ENCODE measurements at regions of chr17 and their contacts with region 1.

Region 1: DNA sequence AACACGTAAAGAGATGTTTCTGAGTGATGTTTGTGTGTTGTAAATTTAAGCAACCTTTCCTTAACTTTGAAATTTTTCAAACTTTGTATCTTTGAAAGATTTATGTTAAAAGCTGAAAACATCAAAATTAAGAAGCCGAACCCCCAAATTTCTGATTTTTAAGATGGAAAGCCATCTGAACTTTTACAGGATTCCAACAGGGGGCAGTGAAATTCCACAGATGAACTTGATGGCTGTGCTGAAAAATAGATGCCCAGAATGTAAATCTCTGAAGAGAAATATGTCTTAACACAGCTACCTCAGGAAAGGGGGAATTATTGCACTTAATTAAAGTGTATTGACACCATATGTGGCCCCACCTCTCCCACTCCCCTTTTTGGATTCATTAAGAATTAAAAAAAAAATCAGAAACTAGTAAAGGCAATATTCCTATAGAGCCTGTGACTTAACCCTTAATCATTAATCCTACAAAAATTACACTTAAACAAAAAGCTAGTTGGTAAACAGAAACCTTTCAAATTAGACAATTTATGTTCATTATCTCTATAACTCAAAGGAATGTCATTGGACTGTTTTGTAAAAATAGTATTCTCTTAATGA is 597.9 kb downstream of the KCNJ2 start:
- DNase-seq: no peak
- ATAC-seq: no peak
- H3K4me3 ChIP-seq: no peak overlapping the region
- H3K27ac ChIP-seq: no peak overlapping the region
- H3K4me1 ChIP-seq: no peaks in the 10 kb centered on the region
- H3K27me3 ChIP-seq: no peaks in the 10 kb centered on the region
- CTCF ChIP-seq: peak; percentile 43 to 55 (median 43)
- EP300 ChIP-seq: no peak
- POLR2A ChIP-seq: no peak
- RAD21 ChIP-seq: peak; percentile 81

Region 2: DNA sequence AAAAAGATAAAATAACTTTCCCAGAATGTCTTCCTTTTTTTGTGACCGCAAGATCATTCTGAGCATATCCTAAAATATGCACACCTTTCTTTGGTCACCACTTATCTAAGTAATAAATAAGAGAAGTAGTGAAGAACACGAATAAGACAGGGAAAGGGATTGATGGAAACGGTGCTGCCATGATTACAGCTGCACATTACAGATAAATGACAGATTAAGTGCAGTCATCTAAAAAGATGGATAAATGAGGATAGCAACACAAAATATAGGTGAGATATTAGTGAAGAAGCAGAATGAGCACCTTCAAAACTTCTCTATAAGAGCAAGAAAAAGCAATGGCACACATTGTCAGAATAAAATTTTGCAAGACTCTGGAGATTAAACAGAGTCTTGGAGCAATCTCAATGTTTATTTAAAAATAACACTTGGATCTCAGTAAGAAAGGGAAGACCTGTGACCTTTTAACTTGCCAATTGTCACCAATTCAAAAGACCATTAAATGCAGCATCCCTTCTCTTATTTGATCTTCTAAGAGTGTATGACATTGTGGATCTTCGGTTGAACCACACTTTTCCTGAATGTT is 30.7 kb before region 1 on chr17:
- CTCF ChIA-PET with region 1: no interaction called
- POLR2A ChIA-PET with region 1: no interaction called
- RAD21 ChIA-PET with region 1: no interaction called
- SMC1A ChIA-PET with region 1: no interaction called
- in situ Hi-C with region 1: no loop called
- intact Hi-C with region 1: no loop called
- DNase-seq: no peak
- ATAC-seq: no peak
- H3K4me3 ChIP-seq: no peak overlapping the region
- H3K27ac ChIP-seq: no peak overlapping the region
- H3K4me1 ChIP-seq: no peaks in the 10 kb centered on the region
- H3K27me3 ChIP-seq: no peaks in the 10 kb centered on the region
- CTCF ChIP-seq: no peak
- EP300 ChIP-seq: no peak
- POLR2A ChIP-seq: no peak
- RAD21 ChIP-seq: no peak

Region 3: DNA sequence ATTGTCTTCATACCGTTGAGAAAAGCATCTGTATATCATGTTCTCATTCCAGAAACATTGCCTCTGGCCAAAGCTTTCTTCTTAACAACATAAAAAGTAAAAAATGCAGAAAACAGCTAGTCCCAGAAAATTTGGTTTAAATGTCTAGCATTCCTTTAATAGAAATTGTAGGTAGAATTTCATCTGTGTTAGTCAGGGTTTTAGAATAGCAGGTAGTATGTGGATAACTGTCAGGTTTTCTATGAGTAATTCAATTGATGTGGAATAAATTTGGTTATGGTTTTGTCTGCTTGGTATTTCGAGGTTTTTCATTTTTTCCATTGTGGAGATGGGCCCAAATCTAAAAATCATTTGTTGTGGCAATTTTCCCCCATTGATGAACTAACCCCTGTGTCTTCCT is 18.9 kb after region 1 on chr17:
- CTCF ChIA-PET with region 1: interaction called, 29 read pairs
- POLR2A ChIA-PET with region 1: no interaction called
- RAD21 ChIA-PET with region 1: interaction called, 3 read pairs
- SMC1A ChIA-PET with region 1: interaction called, 16 read pairs
- in situ Hi-C with region 1: no loop called
- intact Hi-C with region 1: no loop called
- DNase-seq: no peak
- ATAC-seq: no peak
- H3K4me3 ChIP-seq: no peak overlapping the region
- H3K27ac ChIP-seq: no peak overlapping the region
- H3K4me1 ChIP-seq: no peaks in the 10 kb centered on the region
- H3K27me3 ChIP-seq: no peaks in the 10 kb centered on the region
- CTCF ChIP-seq: no peak
- EP300 ChIP-seq: no peak
- POLR2A ChIP-seq: no peak
- RAD21 ChIP-seq: no peak

Region 4: GRCh38 chr17:71068408-71068750 is 301.2 kb after region 1 on chr17:
- CTCF ChIA-PET with region 1: no interaction called
- POLR2A ChIA-PET with region 1: no interaction called
- RAD21 ChIA-PET with region 1: no interaction called
- SMC1A ChIA-PET with region 1: no interaction called
- in situ Hi-C with region 1: no loop called
- intact Hi-C with region 1: no loop called
- DNase-seq: no peak
- ATAC-seq: no peak
- H3K4me3 ChIP-seq: no peak overlapping the region
- H3K27ac ChIP-seq: no peak overlapping the region
- H3K4me1 ChIP-seq: no peaks in the 10 kb centered on the region
- H3K27me3 ChIP-seq: no peaks in the 10 kb centered on the region
- CTCF ChIP-seq: no peak
- EP300 ChIP-seq: no peak
- POLR2A ChIP-seq: no peak
- RAD21 ChIP-seq: no peak

Region 5: GRCh38 chr17:71084219-71084618 is 317.0 kb after region 1 on chr17:
- CTCF ChIA-PET with region 1: interaction called, 16 read pairs
- POLR2A ChIA-PET with region 1: no interaction called
- RAD21 ChIA-PET with region 1: interaction called, 19 read pairs
- SMC1A ChIA-PET with region 1: interaction called, 5 read pairs
- in situ Hi-C with region 1: no loop called
- intact Hi-C with region 1: loop called (anchors 2 kb)
- DNase-seq: no peak
- ATAC-seq: peak; percentile 62
- H3K4me3 ChIP-seq: no peak overlapping the region
- H3K27ac ChIP-seq: no peak overlapping the region
- H3K4me1 ChIP-seq: no peaks in the 10 kb centered on the region
- H3K27me3 ChIP-seq: no peaks in the 10 kb centered on the region
- CTCF ChIP-seq: peak; percentile 18 to 35 (median 29); a peak in 3 of 6 replicates
- EP300 ChIP-seq: no peak
- POLR2A ChIP-seq: no peak
- RAD21 ChIP-seq: peak; percentile 48; the same call in 1 of the 2 replicates

Region 6: GRCh38 chr17:71460943-71461342 is 693.7 kb after region 1 on chr17:
- CTCF ChIA-PET with region 1: interaction called, 43 read pairs
- POLR2A ChIA-PET with region 1: no interaction called
- RAD21 ChIA-PET with region 1: interaction called, 9 read pairs
- SMC1A ChIA-PET with region 1: interaction called, 14 read pairs
- in situ Hi-C with region 1: no loop called
- intact Hi-C with region 1: loop called (anchors 1 kb)
- DNase-seq: no peak
- ATAC-seq: no peak
- H3K4me3 ChIP-seq: no peak overlapping the region
- H3K27ac ChIP-seq: no peak overlapping the region
- H3K4me1 ChIP-seq: no peaks in the 10 kb centered on the region
- H3K27me3 ChIP-seq: no peaks in the 10 kb centered on the region
- CTCF ChIP-seq: peak; percentile 7 to 26 (median 16); a peak in 3 of 6 replicates
- EP300 ChIP-seq: no peak
- POLR2A ChIP-seq: no peak
- RAD21 ChIP-seq: peak; percentile 13; the same call in 1 of the 2 replicates

Region 7: DNA sequence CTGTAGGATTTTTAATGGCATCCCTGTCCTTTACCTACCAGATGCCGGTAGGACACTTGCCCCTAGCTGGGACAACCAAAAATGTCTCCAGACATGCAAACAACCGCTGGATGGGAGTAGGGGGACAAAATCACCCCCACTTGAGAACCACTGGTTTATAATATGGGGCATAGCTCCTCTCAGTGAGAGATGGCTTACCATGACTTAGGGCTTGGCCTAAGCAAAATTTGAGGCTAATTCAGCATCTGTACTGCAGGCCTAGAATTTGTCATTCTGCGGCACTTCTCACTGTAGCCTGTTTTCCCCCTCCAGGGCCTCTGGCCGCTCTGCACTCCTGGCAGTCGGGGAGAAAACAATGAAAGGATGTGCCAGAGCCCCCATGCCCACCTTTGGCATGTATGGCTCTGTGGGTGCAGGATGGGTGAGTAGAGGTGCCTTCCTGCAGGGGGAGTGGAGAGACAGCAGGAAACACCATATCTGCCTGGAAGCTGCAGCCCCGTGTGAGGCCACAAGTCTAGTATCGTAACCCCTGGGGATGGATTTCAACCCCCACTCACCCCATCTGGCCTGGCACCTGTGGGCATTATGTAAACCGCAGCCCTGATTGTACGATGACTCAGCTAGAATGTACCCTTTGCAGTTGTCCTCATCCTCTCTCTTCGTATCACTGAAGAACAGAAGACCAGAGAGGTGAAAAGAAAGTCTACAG is 1621.7 kb after region 1 on chr17:
- CTCF ChIA-PET with region 1: no interaction called
- POLR2A ChIA-PET with region 1: no interaction called
- RAD21 ChIA-PET with region 1: no interaction called
- SMC1A ChIA-PET with region 1: no interaction called
- in situ Hi-C with region 1: loop called (anchors 25 kb)
- intact Hi-C with region 1: no loop called
- DNase-seq: peak; percentile 93
- ATAC-seq: peak; percentile 77
- H3K4me3 ChIP-seq: no peak overlapping the region
- H3K27ac ChIP-seq: 0 out of 2 replicates have a peak overlapping the region, but pooled peaks have one; percentile 14
- H3K4me1 ChIP-seq: peaks cover 40% of the 10 kb centered on the region
- H3K27me3 ChIP-seq: no peaks in the 10 kb centered on the region
- CTCF ChIP-seq: peak; percentile 41 to 64 (median 47); a peak in 5 of 6 replicates
- EP300 ChIP-seq: peak in 1 of 2 experiments; percentile 62; a peak in 1 of 4 replicates
- POLR2A ChIP-seq: no peak
- RAD21 ChIP-seq: peak; percentile 55; the same call in 1 of the 2 replicates